Mammary epithelial cell (primary cell): ENCODE measurements at regions of chr4 and their contacts with region 1.

Region 1: DNA sequence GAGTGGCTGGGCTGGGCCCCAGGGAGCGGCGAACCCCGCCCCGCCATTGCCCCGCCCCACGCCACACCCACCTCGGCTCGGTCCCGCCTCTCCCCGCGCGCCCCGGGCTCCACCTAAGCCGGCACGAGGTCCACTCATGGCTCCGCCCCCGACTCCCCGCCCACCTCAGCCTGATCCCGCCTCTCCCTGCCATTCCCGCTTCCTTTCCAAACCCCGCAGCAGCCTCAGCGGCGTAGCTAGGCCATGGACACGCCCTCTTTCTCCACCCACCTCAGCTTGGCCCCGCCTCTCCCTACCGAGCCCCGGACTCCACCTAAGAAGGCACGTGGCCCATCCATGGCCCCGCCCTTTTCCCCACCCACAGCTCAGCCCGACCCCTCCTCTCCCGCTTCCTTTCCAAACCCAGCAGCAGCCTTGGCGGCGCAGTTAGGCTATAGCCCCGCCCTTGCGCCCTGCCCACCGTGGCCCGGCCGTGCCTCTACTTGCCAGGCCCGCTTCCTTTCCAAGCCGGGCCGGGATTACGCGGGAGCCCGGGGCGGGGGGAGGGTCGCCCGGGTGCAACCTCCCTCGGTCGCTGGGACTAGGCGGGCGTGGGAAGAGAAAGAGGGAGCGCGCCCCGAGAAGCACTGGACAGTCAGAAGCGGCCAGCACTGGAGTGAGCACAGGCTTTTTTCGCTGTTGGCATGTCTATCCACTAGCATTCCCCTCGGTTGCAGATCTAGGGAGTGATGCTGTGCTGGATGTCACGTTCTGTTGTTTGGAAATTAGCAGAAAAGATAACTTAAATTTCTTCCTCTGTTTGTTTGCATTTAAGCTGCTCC is at the start of gene RELL1:
- DNase-seq: peak; percentile 99
- H3K4me3 ChIP-seq: peak within 1 kb of the TSS; percentile 73 to 98 (median 87)
- H3K27ac ChIP-seq: peak within 1 kb of the TSS; percentile 67
- H3K4me1 ChIP-seq: peaks cover 21% of the 10 kb centered on the region
- H3K27me3 ChIP-seq: no peaks in the 10 kb centered on the region
- CTCF ChIP-seq: no peak
- total RNA-seq, gene RELL1: 35.7 to 93.2 TPM

Region 2: GRCh38 chr4:37666625-37667071 is 19.9 kb before region 1 on chr4:
- CTCF ChIA-PET with region 1: no interaction called
- dilution Hi-C with region 1: no loop called
- in situ Hi-C with region 1: no loop called
- intact Hi-C with region 1: loop called (anchors 1 kb)
- DNase-seq: peak; percentile 92
- H3K4me3 ChIP-seq: no peak overlapping the region
- H3K27ac ChIP-seq: peak overlapping the region; percentile 47
- H3K4me1 ChIP-seq: peaks cover 40% of the 10 kb centered on the region
- H3K27me3 ChIP-seq: no peaks in the 10 kb centered on the region
- CTCF ChIP-seq: peak in 1 of 2 donors; percentile 21

Region 3: GRCh38 chr4:37762294-37762990 is 75.9 kb after region 1 on chr4:
- CTCF ChIA-PET with region 1: no interaction called
- dilution Hi-C with region 1: no loop called
- in situ Hi-C with region 1: no loop called
- intact Hi-C with region 1: loop called (anchors 2 kb)
- DNase-seq: peak; percentile 79
- H3K4me3 ChIP-seq: no peak overlapping the region
- H3K27ac ChIP-seq: peak overlapping the region; percentile 61
- H3K4me1 ChIP-seq: peaks cover 13% of the 10 kb centered on the region
- H3K27me3 ChIP-seq: no peaks in the 10 kb centered on the region
- CTCF ChIP-seq: no peak